ENCODE measurements at regions of chr5 and their contacts with region 1.

Region 1: DNA sequence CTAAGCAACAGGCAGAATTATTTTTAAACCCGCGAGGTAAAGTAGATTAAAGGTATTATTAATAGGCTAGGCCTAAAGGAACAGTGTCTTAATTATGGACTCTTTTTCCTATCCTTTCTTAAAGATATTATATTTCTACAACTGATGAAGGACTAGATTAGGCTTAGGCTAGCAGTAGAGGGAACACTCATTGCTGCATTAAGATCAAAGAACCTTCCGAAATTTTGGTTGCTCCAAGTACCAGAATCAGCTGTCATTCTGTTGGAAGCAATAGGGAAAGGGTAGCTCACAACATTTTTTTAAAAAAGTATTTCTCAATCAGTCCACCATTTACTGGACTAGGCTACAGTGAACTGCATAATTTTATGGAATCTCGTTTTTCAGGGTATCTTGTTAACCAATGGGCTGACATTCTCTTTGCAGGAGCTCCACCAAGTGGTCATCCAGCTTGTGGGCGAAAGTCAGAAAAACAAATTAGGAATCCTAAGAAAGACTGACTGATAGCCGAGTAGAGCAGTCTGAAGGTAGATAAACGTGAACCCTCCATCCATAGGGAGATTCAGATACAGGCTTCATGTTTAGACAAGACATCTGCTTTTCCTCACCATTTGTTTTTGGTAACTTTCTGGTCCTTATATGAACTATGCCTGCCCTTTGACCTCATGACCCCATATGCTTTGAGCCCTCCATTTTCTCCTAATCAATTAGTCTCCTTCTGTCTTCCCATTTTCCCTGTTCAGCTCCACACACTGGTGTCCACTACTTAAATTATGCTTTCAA is 103.6 kb upstream of the CHD1 start:
- DNase-seq: peak; percentile 70 to 75
- H3K4me3 ChIP-seq: no peak overlapping the region
- H3K4me3 Mint-ChIP-seq: no peak overlapping the region
- H3K27ac Mint-ChIP-seq: no peak overlapping the region
- H3K4me1 ChIP-seq: peaks cover 13% of the 10 kb centered on the region
- H3K4me1 Mint-ChIP-seq: peaks cover 23% of the 10 kb centered on the region
- H3K27me3 ChIP-seq: no peaks in the 10 kb centered on the region
- H3K27me3 Mint-ChIP-seq: no peaks in the 10 kb centered on the region
- CTCF ChIP-seq: peak; percentile 71 to 87

Region 2: DNA sequence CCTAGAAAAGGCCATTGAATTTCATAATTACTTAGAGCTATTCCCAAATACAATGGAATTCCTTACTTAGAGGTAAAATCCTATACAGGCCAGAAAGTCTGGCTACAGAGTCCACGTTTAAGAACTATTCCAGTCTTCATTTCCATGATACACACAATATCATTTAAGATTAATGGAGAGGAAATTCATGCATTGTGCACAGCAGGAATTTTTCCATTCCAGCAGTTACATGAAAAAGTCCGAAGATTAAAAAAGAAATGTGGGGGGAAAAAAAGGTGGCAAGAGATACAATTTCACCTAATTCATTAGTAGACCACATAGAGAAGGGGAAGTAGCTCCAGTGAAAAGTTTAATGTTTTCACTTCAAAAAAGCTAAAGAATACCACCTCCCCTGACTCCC is 166.7 kb before region 1 on chr5:
- CTCF ChIA-PET with region 1: no interaction called
- POLR2A ChIA-PET with region 1: no interaction called
- intact Hi-C with region 1: loop called (anchors 1 kb)
- DNase-seq: no peak
- H3K4me3 ChIP-seq: no peak overlapping the region
- H3K4me3 Mint-ChIP-seq: peak overlapping the region; percentile 58
- H3K27ac Mint-ChIP-seq: peak overlapping the region; percentile 85
- H3K4me1 ChIP-seq: peaks cover 38% of the 10 kb centered on the region
- H3K4me1 Mint-ChIP-seq: peaks cover 42% of the 10 kb centered on the region
- H3K27me3 ChIP-seq: no peaks in the 10 kb centered on the region
- H3K27me3 Mint-ChIP-seq: no peaks in the 10 kb centered on the region
- CTCF ChIP-seq: no peak

Region 3: GRCh38 chr5:98905857-98906690 is 126.3 kb before region 1 on chr5:
- CTCF ChIA-PET with region 1: no interaction called
- POLR2A ChIA-PET with region 1: no interaction called
- intact Hi-C with region 1: loop called (anchors 1 kb)
- DNase-seq: peak in 1 of 2 experiments; percentile 47
- H3K4me3 ChIP-seq: no peak overlapping the region
- H3K4me3 Mint-ChIP-seq: no peak overlapping the region
- H3K27ac Mint-ChIP-seq: no peak overlapping the region
- H3K4me1 ChIP-seq: no peaks in the 10 kb centered on the region
- H3K4me1 Mint-ChIP-seq: peaks cover 6% of the 10 kb centered on the region
- H3K27me3 ChIP-seq: no peaks in the 10 kb centered on the region
- H3K27me3 Mint-ChIP-seq: no peaks in the 10 kb centered on the region
- CTCF ChIP-seq: peak; percentile 59 to 68

Region 4: DNA sequence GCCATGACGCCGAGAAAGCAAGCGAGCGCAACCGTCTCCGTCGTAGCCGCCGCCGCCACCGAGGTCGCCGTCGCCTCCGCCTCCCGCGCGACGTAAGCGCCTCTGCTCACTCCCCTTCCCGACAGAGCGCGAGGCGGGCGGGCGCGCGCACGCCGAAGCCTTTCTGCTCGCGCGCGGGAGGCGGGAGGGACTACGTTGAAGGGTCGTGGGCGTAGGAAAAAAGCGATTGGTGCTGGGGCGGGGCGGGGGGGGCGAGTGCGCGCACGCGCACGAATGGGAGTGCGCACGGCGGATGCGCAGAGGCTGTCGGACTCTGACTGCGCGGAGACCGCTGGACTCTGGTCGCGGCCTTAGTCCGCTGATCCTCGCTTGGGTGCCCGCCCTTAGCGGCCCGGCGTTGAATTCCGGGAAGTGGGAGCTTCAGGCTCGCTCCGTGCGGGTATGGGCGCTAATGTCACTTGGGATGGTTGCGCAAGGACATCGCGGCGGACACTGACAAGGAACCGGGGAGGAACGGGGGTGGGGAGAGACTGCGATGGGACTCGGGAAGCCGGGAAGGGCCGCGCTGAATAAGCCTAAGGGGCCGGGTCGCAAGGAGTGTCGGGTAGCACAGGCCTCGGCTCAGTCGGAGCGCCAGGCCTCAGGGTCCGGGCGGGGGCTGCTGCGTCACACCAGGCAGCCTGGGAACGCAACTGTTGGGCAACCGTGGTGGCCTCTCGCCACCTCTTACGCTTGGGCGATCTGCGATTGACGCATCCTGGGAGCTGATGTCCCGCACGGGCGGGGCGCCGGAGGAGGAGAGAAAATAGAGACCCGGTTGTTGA is 103.3 kb before region 1 on chr5 and contains the start of gene CHD1:
- CTCF ChIA-PET with region 1: interaction called, 3 read pairs
- POLR2A ChIA-PET with region 1: interaction called, 3 read pairs
- intact Hi-C with region 1: loop called (anchors 1 kb)
- DNase-seq: peak; percentile 96
- H3K4me3 ChIP-seq: peak within 1 kb of the TSS; percentile 83
- H3K4me3 Mint-ChIP-seq: peak within 1 kb of the TSS; percentile 79
- H3K27ac Mint-ChIP-seq: peak within 1 kb of the TSS; percentile 98
- H3K4me1 ChIP-seq: 0 out of 2 replicates have a peak, but pooled peaks cover 2% of the 10 kb centered on the region
- H3K4me1 Mint-ChIP-seq: no peaks in the 10 kb centered on the region
- H3K27me3 ChIP-seq: no peaks in the 10 kb centered on the region
- H3K27me3 Mint-ChIP-seq: no peaks in the 10 kb centered on the region
- CTCF ChIP-seq: no peak
- total RNA-seq, gene CHD1: 51.1 and 52.5 TPM in 2 replicates

Region 5: GRCh38 chr5:98963019-98963418 is 69.4 kb before region 1 on chr5:
- CTCF ChIA-PET with region 1: no interaction called
- POLR2A ChIA-PET with region 1: no interaction called
- intact Hi-C with region 1: loop called (anchors 2 kb)
- DNase-seq: peak in 1 of 2 experiments; percentile 4
- H3K4me3 ChIP-seq: no peak overlapping the region
- H3K4me3 Mint-ChIP-seq: no peak overlapping the region
- H3K27ac Mint-ChIP-seq: peak overlapping the region; percentile 42
- H3K4me1 ChIP-seq: peaks cover 21% of the 10 kb centered on the region
- H3K4me1 Mint-ChIP-seq: peaks cover 20% of the 10 kb centered on the region
- H3K27me3 ChIP-seq: no peaks in the 10 kb centered on the region
- H3K27me3 Mint-ChIP-seq: no peaks in the 10 kb centered on the region
- CTCF ChIP-seq: no peak

Region 6: DNA sequence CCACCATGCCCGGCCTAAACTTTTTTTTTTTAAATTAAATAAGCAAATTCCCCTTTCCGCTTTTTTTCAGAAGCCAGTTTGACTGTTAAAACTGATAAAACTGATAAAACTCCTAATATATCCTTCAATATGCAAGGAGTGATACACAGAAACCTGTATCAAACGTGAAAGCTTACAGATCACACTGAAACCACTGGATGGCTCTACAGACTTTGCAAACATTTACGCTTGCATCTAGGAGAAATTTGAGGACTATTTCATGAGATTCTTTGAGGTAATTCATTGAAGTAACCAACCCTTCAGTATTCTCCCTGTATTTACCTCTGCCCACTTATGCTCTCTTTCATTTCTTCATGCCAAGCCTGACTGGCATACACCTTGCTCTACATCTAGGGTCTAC is 63.0 kb before region 1 on chr5:
- CTCF ChIA-PET with region 1: interaction called, 3 read pairs
- POLR2A ChIA-PET with region 1: no interaction called
- intact Hi-C with region 1: loop called (anchors 1 kb)
- DNase-seq: no peak
- H3K4me3 ChIP-seq: no peak overlapping the region
- H3K4me3 Mint-ChIP-seq: no peak overlapping the region
- H3K27ac Mint-ChIP-seq: no peak overlapping the region
- H3K4me1 ChIP-seq: peaks cover 3% of the 10 kb centered on the region
- H3K4me1 Mint-ChIP-seq: no peaks in the 10 kb centered on the region
- H3K27me3 ChIP-seq: no peaks in the 10 kb centered on the region
- H3K27me3 Mint-ChIP-seq: no peaks in the 10 kb centered on the region
- CTCF ChIP-seq: no peak

Region 7: GRCh38 chr5:99060306-99061261 is 28.2 kb after region 1 on chr5:
- CTCF ChIA-PET with region 1: no interaction called
- POLR2A ChIA-PET with region 1: interaction called, 3 read pairs
- intact Hi-C with region 1: loop called (anchors 1 kb)
- DNase-seq: peak; percentile 69 to 72
- H3K4me3 ChIP-seq: no peak overlapping the region
- H3K4me3 Mint-ChIP-seq: no peak overlapping the region
- H3K27ac Mint-ChIP-seq: no peak overlapping the region
- H3K4me1 ChIP-seq: no peaks in the 10 kb centered on the region
- H3K4me1 Mint-ChIP-seq: peaks cover 13% of the 10 kb centered on the region
- H3K27me3 ChIP-seq: no peaks in the 10 kb centered on the region
- H3K27me3 Mint-ChIP-seq: peaks cover 8% of the 10 kb centered on the region
- CTCF ChIP-seq: peak; percentile 83 to 87